SK-N-SH (cell line): ENCODE measurements at regions of chr3 and their contacts with region 1.

Region 1: GRCh38 chr3:139935016-139935865 is at the start of gene CLSTN2:
- DNase-seq: peak; percentile 92
- H3K4me3 ChIP-seq: peak within 1 kb of the TSS; percentile 32 to 50; a peak in 3 of 4 replicates
- H3K27ac ChIP-seq: peak within 1 kb of the TSS in 1 of 2 experiments; percentile 68; a peak in 2 of 4 replicates
- H3K4me1 ChIP-seq: peaks cover 0 to 16% of the 10 kb centered on the region in 2 experiments; a peak in 2 of 4 replicates
- H3K27me3 ChIP-seq: 0 out of 2 replicates have a peak, but pooled peaks cover 5% of the 10 kb centered on the region
- CTCF ChIP-seq: no peak
- EP300 ChIP-seq: no peak
- RAD21 ChIP-seq: no peak; the same call in 1 of the 2 replicates
- polyA plus RNA-seq, gene CLSTN2: 0.02 and 0.03 TPM in 2 replicates

Region 2: GRCh38 chr3:139561959-139562676 is 373.1 kb before region 1 on chr3:
- CTCF ChIA-PET with region 1: interaction called, 80 read pairs
- POLR2A ChIA-PET with region 1: interaction called, 6 read pairs
- DNase-seq: peak; percentile 55
- H3K4me3 ChIP-seq: no peak overlapping the region; a peak in 1 of 4 replicates
- H3K27ac ChIP-seq: no peak overlapping the region
- H3K4me1 ChIP-seq: peaks cover 0 to 16% of the 10 kb centered on the region in 2 experiments; a peak in 2 of 4 replicates
- H3K27me3 ChIP-seq: no peaks in the 10 kb centered on the region
- CTCF ChIP-seq: peak; percentile 74
- EP300 ChIP-seq: no peak
- RAD21 ChIP-seq: peak; percentile 96

Region 3: GRCh38 chr3:139718415-139718814 is 216.8 kb before region 1 on chr3:
- CTCF ChIA-PET with region 1: interaction called, 21 read pairs
- POLR2A ChIA-PET with region 1: no interaction called
- DNase-seq: peak; percentile 45
- H3K4me3 ChIP-seq: no peak overlapping the region
- H3K27ac ChIP-seq: no peak overlapping the region
- H3K4me1 ChIP-seq: peaks cover 0 to 5% of the 10 kb centered on the region in 2 experiments; a peak in 1 of 4 replicates
- H3K27me3 ChIP-seq: no peaks in the 10 kb centered on the region
- CTCF ChIP-seq: no peak
- EP300 ChIP-seq: no peak
- RAD21 ChIP-seq: peak; percentile 59

Region 4: DNA sequence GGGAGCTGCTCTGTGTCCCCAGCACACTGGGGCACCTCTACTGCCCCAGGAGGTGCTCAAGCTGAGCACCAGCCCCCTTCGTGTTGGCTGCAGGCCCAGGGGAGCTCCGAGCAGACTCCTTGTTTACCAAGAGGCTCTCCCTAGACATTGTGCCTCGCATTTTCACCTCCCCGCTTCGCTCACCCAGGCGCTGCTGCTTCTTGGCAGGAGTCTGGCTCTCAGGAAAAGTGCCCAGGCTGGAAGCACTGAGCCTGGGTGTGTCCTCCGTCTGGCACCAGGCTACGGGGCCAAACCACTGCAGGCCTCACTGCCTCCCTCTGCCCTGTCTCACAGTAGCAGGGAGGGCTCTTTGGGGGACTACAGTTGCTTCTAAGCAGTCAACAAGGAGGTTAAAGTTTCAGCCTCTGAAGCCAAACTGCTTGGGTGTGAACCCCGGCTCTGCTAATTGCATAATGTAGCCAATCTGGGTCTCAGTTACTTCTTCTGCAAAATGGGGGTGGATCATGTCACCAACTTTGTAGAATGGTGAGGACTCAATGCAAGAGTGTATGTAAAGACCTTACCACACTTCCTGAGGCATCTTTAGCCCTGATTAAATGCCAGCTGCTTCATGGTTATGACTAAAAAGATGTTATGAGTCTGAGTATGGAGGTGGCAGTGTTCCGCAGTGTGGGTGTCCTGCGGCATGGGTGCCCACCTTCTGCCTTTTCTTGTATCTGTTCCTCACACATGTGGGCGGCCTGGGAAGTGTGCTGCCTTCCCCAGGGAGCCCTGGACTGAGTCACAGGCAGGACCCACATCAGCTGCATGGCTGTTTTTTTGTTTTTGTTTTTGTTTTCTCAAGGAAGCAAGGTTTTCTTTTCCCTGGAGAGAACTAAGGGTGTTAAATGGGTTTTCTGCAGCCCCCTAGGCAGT is 88.6 kb after region 1 on chr3:
- CTCF ChIA-PET with region 1: interaction called, 12 read pairs
- POLR2A ChIA-PET with region 1: no interaction called
- DNase-seq: no peak
- H3K4me3 ChIP-seq: no peak overlapping the region
- H3K27ac ChIP-seq: no peak overlapping the region; a peak in 1 of 4 replicates
- H3K4me1 ChIP-seq: peaks cover 0 to 44% of the 10 kb centered on the region in 2 experiments; a peak in 2 of 4 replicates
- H3K27me3 ChIP-seq: no peaks in the 10 kb centered on the region
- CTCF ChIP-seq: no peak
- EP300 ChIP-seq: no peak
- RAD21 ChIP-seq: no peak

Region 5: DNA sequence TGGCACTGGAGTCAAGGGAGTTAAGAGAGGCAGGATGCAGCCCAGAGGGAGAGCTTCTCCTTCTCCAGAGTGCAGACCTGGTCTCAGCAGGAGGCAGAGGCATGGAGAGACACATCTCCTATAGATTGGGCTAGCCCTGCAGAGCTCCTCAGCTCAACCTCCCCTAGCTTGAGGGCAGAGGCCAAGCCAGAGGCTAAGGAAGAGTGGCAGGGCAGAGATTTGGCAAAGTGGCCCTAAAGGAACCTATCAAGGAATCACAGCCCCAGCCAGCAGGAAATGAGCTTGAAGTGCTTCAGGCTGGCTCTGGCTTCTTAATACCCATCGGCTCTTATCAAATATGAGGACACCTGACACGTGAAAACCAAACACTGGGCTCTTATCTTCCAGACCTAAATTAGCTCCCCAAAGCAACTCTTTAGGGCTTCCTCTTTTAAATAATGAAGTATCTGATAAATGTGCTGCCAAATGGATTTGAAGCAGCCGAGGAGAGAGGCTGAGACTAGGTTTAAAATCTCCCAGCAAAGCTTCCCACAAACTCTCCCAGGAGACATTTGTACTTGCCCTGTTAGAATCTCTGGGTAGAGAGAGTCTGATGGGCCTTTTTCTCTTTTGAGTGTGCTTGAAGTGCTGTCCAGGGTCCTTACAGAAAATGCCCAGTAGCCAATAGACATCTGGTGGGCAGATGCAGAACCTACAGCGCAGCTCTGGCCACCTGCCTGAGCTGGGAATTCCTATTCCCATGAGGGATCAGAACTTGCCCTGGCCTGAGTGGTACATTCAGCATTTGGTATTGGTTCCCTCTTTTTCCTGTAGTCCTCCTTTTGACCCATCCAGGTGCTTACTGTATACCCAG is 271.2 kb after region 1 on chr3:
- CTCF ChIA-PET with region 1: interaction called, 14 read pairs
- POLR2A ChIA-PET with region 1: no interaction called
- DNase-seq: peak; percentile 57
- H3K4me3 ChIP-seq: no peak overlapping the region
- H3K27ac ChIP-seq: peak overlapping the region in 1 of 2 experiments; percentile 89; a peak in 2 of 4 replicates
- H3K4me1 ChIP-seq: peaks cover 0 to 23% of the 10 kb centered on the region in 2 experiments; a peak in 2 of 4 replicates
- H3K27me3 ChIP-seq: no peaks in the 10 kb centered on the region
- CTCF ChIP-seq: no peak
- EP300 ChIP-seq: peak in 1 of 2 experiments; percentile 83; a peak in 2 of 4 replicates
- RAD21 ChIP-seq: peak; percentile 38; the same call in 1 of the 2 replicates

Region 6: DNA sequence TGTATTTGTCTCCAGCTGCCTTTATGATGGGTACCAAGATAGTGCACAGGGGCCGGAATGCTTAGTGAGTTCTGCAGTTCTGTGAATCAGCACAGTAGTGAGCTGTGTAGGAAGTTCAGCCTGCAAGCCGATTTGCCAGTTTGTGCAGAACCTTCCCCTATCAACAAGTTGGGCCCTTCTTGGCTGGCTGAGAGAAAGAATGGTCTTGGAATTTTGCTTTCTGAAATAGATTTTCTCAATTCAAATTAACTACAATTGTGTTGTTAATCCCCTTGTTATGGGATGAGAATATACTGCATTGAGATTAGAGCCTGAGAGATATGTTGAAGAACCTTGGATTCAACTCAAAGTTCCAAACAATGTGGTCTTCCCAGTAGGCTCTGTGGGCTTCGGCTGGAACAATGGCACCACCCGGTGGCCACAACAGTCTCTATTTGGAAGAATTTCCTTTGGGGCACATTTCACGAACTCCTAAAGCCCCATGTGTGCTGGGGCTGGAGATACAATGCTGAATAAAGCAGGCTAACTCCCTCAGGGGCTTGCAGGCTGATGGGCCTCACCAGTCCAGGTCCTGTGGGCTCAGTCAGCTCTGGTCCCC is 801.7 kb after region 1 on chr3:
- CTCF ChIA-PET with region 1: interaction called, 29 read pairs
- POLR2A ChIA-PET with region 1: no interaction called
- DNase-seq: peak; percentile 54
- H3K4me3 ChIP-seq: peak overlapping the region in 1 of 2 experiments; percentile 52; a peak in 1 of 4 replicates
- H3K27ac ChIP-seq: no peak overlapping the region
- H3K4me1 ChIP-seq: no peaks in the 10 kb centered on the region
- H3K27me3 ChIP-seq: no peaks in the 10 kb centered on the region
- CTCF ChIP-seq: no peak
- EP300 ChIP-seq: no peak
- RAD21 ChIP-seq: peak; percentile 81